Esophagus muscularis mucosa (tissue), 4 donors: ENCODE measurements at regions of chr11 and their contacts with region 1.

Region 1: DNA sequence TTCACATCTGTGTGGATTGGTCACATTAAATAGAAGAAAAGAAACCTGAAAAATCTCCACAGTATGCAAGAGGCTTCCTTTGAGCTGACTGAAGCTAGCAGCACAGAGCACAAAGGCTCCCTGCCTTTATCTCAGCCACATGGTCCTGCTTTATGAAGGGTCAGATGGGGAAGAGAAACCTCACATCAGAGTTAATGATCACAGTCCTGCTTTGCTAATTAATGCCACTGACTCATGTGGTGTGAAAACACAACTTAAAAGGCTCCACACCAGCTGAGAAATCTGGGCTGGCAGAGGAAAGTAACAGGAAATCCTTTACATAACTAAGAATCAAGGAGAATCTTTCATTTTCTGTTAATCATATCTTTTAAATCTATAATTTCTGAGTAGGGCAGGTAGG is 1291.0 kb downstream of the LRRC4C start:
- DNase-seq: no peak
- H3K4me3 ChIP-seq: no peak overlapping the region
- H3K27ac ChIP-seq: no peak overlapping the region
- H3K4me1 ChIP-seq: no peaks in the 10 kb centered on the region
- H3K27me3 ChIP-seq: no peaks in the 10 kb centered on the region
- CTCF ChIP-seq: no peak
- EP300 ChIP-seq: no peak
- POLR2A ChIP-seq: no peak

Region 2: GRCh38 chr11:40215556-40215955 is 47.1 kb after region 1 on chr11:
- intact Hi-C with region 1: loop called (anchors 2 kb)
- DNase-seq: no peak
- H3K4me3 ChIP-seq: no peak overlapping the region
- H3K27ac ChIP-seq: no peak overlapping the region
- H3K4me1 ChIP-seq: no peaks in the 10 kb centered on the region
- H3K27me3 ChIP-seq: no peaks in the 10 kb centered on the region
- CTCF ChIP-seq: no peak
- EP300 ChIP-seq: no peak
- POLR2A ChIP-seq: no peak

Region 3: DNA sequence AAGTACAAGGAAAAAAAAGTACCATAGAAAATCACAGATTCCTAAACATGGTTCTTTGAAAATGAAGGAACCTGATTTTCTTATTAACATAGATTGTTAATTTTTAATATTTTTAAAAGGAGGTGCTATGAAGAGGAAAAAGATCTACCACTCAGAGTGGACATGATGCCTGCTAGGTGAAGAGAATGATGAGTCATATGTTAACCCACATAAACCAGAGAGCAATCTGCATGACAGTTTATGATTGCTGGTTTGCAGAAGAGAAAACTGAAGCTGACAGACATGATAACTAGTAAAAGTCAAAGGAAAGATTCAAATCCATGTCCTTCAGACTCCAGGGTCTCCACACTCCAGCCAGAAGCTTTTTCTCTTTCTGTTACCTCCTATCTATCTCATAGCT is 59.3 kb after region 1 on chr11:
- intact Hi-C with region 1: no loop called
- DNase-seq: no peak
- H3K4me3 ChIP-seq: no peak overlapping the region
- H3K27ac ChIP-seq: no peak overlapping the region
- H3K4me1 ChIP-seq: no peaks in the 10 kb centered on the region
- H3K27me3 ChIP-seq: peaks cover 0 to 3% (median 0%) of the 10 kb centered on the region in 4 donors
- CTCF ChIP-seq: no peak
- EP300 ChIP-seq: no peak
- POLR2A ChIP-seq: no peak